Spleen (tissue), 13 donors: ENCODE measurements at regions of chr15 and their contacts with region 1.

Region 1: GRCh38 chr15:99275525-99276128 is 24.3 kb downstream of the LRRC28 start:
- DNase-seq: no peak
- H3K4me3 ChIP-seq: no peak overlapping the region
- H3K27ac ChIP-seq: no peak overlapping the region
- H3K4me1 ChIP-seq: peaks cover 0 to 28% (median 3%) of the 10 kb centered on the region in 6 donors
- H3K27me3 ChIP-seq: no peaks in the 10 kb centered on the region
- CTCF ChIP-seq: no peak
- POLR2A ChIP-seq: no peak

Region 2: DNA sequence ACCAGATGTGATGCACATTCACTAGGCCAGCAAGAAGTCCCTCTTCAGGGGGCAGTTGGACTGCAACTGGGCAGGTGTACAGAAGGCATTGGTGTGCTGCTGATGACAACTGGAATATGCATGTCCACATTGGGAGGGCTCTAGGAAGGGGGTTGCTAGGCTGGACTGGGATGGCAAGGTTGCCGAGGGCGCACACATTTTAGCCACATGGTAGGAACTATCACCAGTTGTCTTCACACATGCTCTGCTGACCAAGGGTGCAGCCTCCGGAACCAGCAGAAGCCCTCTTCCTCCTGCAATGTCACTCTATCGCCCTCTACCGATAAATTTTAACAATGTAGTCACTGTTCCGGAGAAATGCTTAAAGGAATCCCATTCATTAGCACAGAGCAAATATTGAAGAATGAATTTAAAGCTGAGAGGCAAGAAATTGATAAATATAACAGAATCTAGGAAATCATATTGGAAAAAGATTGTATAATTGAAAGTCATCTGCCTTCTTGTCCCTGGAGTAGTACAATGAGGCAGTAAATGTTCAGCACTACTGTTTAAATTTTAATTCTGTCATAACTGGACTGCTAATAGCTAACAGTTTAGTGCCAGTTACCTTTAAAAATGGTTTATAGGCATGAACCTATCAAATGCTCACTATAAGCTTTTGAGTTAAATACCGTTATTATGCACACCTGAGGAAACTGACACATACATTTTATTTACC is 480.2 kb after region 1 on chr15:
- intact Hi-C with region 1: loop called (anchors 10 kb)
- DNase-seq: peak; percentile 80
- H3K4me3 ChIP-seq: no peak overlapping the region
- H3K27ac ChIP-seq: no peak overlapping the region
- H3K4me1 ChIP-seq: peaks cover 0 to 8% (median 4%) of the 10 kb centered on the region in 6 donors
- H3K27me3 ChIP-seq: no peaks in the 10 kb centered on the region
- CTCF ChIP-seq: peak; percentile 15 to 77 (median 69)
- POLR2A ChIP-seq: no peak